ENCODE measurements at regions of chr22 and their contacts with region 1.

Region 1: GRCh38 chr22:40922484-40923303 is 28.5 kb upstream of the RBX1 start:
- DNase-seq: no peak
- H3K4me3 ChIP-seq: no peak overlapping the region
- CTCF ChIP-seq: peak; percentile 47

Region 2: DNA sequence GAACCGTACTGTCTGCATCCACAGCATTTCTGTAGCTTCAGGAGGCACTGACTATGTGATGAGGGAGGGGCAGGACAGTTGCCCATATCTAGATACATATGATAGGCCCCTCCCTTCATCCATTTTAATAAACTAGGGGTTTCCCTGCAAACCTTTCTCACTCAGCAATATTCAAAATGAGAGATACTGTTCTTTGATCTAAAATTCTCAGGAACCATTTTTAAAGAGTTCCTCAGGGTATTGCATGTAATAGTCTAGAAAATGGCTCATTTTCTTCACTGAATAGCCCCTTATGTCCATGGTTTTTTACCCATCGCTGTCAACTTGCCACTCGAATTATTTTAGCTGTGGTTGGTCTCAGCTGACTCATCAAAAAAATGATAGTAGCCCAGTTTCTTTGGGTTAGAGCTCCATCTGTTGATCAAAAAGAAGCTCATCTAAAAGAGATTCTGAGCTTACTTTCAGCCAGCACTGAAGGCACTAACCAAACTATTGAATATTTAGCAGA is 23.8 kb before region 1 on chr22:
- CTCF ChIA-PET with region 1: interaction called, 13 read pairs
- POLR2A ChIA-PET with region 1: no interaction called
- DNase-seq: no peak
- H3K4me3 ChIP-seq: no peak overlapping the region
- CTCF ChIP-seq: peak; percentile 40

Region 3: DNA sequence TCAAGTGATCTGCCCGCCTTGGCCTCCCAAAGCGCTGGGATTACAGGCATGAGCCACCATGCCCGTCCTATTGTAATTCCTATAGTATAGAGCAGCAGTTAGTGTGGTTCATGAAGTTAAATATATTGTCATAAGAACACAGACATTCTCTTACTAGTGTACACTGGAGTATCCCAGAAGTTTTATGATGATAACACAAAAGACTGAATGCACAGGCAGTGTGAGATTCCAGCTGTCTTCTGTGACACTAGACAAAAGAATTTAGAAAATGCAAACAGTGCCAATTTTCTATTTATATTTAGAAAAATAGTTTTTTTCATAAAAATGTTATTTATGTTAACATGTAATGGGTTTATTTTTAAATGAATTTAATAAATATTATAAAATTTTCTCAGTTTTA is 10.9 kb before region 1 on chr22:
- CTCF ChIA-PET with region 1: interaction called, 85 read pairs
- POLR2A ChIA-PET with region 1: no interaction called
- DNase-seq: no peak
- H3K4me3 ChIP-seq: no peak overlapping the region
- CTCF ChIP-seq: no peak

Region 4: GRCh38 chr22:40965936-40966725 is 43.4 kb after region 1 on chr22:
- CTCF ChIA-PET with region 1: interaction called, 11 read pairs
- POLR2A ChIA-PET with region 1: no interaction called
- DNase-seq: no peak
- H3K4me3 ChIP-seq: no peak overlapping the region
- CTCF ChIP-seq: no peak

Region 5: GRCh38 chr22:41117127-41117965 is 194.7 kb after region 1 on chr22:
- CTCF ChIA-PET with region 1: interaction called, 15 read pairs
- POLR2A ChIA-PET with region 1: no interaction called
- DNase-seq: no peak
- H3K4me3 ChIP-seq: no peak overlapping the region
- CTCF ChIP-seq: no peak

Region 6: GRCh38 chr22:41146573-41146972 is 223.9 kb after region 1 on chr22:
- CTCF ChIA-PET with region 1: interaction called, 15 read pairs
- POLR2A ChIA-PET with region 1: no interaction called
- DNase-seq: no peak
- H3K4me3 ChIP-seq: no peak overlapping the region
- CTCF ChIP-seq: no peak

Region 7: GRCh38 chr22:41237707-41238569 is 315.2 kb after region 1 on chr22:
- CTCF ChIA-PET with region 1: interaction called, 38 read pairs
- POLR2A ChIA-PET with region 1: interaction called, 3 read pairs
- DNase-seq: no peak
- H3K4me3 ChIP-seq: peak overlapping the region; percentile 38
- CTCF ChIP-seq: peak; percentile 47

Measured in AG04449 (cell line).